ENCODE measurements at regions of chr11 and their contacts with region 1.

Region 1: GRCh38 chr11:236774-237767 is at the start of gene PSMD13:
- DNase-seq: peak; percentile 79 to 98 (median 86)

Region 2: DNA sequence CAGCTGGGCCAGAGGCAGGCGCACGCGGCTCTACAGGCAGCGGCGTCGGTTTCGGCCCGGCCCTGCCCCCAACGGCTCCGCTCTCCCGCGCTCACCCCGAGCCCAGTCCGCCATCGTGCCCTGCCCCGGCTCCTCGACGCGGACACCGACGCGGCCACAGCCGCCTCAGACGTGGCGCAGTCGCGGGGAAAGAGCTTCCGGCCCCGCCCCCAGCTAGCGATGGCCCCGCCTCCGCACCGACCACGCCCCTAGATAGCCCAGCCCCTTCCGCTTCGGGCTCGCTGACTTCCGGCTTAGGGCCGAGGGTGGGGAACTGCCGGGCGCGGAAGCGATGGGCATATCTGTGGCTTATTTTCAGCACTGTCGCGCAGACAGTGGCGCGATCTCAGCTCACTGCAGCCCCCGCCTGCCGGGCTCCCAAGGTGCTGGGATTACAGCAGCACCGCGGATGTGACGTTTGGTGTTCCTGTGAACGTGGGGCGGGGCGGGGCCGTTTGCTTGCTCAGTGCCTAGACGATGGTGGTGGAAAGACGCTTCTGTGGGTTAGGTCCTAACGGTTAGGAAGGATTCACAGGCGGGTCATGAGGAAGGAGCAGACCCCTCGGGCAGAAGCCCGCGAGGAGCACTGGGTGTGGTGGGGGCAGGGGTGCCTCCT is 29.7 kb before region 1 on chr11 and contains the starts of genes BET1L and RIC8A:
- intact Hi-C with region 1: loop called (anchors 2 kb)
- DNase-seq: peak; percentile 93 to 100 (median 98)